ENCODE measurements at regions of chr3 and their contacts with region 1.

Region 1: GRCh38 chr3:168213920-168214319 is 118.2 kb upstream of the GOLIM4 start:
- DNase-seq: peak; percentile 17
- ATAC-seq: peak; percentile 93
- H3K4me3 ChIP-seq: no peak overlapping the region; the same call in 1 of the 2 replicates
- H3K27ac ChIP-seq: no peak overlapping the region; the same call in 1 of the 2 replicates
- H3K4me1 ChIP-seq: peaks cover 3% of the 10 kb centered on the region; the same call in 1 of the 2 replicates
- H3K27me3 ChIP-seq: no peaks in the 10 kb centered on the region
- CTCF ChIP-seq: no peak
- EP300 ChIP-seq: no peak
- POLR2A ChIP-seq: no peak
- RAD21 ChIP-seq: no peak

Region 2: DNA sequence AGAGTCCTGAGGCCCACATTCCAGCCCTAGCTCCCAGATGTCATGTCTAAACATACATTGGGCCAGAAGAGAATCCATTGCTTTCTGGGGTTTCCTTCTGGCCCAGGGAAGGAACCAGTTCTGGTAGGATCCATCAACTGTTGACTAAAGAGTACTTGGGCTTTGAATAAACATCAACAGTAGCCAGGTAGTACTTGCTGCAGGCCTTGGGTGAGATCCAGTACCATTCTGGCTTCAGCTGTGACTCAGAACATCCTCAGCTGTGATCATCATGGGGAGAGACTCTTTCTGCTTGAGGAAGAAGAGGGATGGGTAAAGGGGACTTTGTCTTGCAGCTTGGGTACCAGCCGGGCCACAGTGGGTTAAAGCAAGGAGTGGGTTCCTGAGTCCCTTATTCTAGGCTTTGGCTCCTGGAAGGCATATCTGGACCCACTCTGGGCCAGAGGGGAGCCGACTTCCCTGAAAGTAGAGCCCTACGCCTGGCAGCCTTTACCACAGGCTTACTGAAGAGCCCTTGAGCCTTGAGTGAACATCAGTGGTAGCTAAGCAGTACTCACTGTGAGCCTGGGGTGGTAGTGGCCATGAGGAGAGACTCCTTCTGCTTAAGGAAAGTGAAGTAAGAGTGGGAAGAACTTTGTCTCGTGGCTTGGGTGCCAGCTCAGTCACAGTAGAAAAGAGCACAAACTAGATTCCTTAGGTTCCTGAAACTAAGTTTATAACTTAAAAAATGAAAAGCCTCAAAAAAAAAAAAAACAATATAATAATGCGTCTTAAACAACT is 246.5 kb before region 1 on chr3:
- CTCF ChIA-PET with region 1: no interaction called
- POLR2A ChIA-PET with region 1: no interaction called
- RAD21 ChIA-PET with region 1: no interaction called
- SMC1A ChIA-PET with region 1: no interaction called
- in situ Hi-C with region 1: no loop called
- intact Hi-C with region 1: no loop called
- DNase-seq: no peak
- ATAC-seq: no peak
- H3K4me3 ChIP-seq: no peak overlapping the region
- H3K27ac ChIP-seq: no peak overlapping the region
- H3K4me1 ChIP-seq: no peaks in the 10 kb centered on the region
- H3K27me3 ChIP-seq: no peaks in the 10 kb centered on the region
- CTCF ChIP-seq: no peak
- EP300 ChIP-seq: no peak
- POLR2A ChIP-seq: no peak
- RAD21 ChIP-seq: no peak

Region 3: GRCh38 chr3:168467115-168467714 is 253.3 kb after region 1 on chr3:
- CTCF ChIA-PET with region 1: interaction called, 4 read pairs
- POLR2A ChIA-PET with region 1: no interaction called
- RAD21 ChIA-PET with region 1: no interaction called
- SMC1A ChIA-PET with region 1: interaction called, 6 read pairs
- in situ Hi-C with region 1: loop called (anchors 10 kb)
- intact Hi-C with region 1: loop called (anchors 1 kb)
- DNase-seq: peak; percentile 21
- ATAC-seq: peak; percentile 92
- H3K4me3 ChIP-seq: no peak overlapping the region
- H3K27ac ChIP-seq: peak overlapping the region; percentile 39; the same call in 1 of the 2 replicates
- H3K4me1 ChIP-seq: no peaks in the 10 kb centered on the region
- H3K27me3 ChIP-seq: no peaks in the 10 kb centered on the region
- CTCF ChIP-seq: peak; percentile 28 to 43 (median 28); a peak in 4 of 6 replicates
- EP300 ChIP-seq: no peak
- POLR2A ChIP-seq: no peak
- RAD21 ChIP-seq: peak; percentile 66

Region 4: GRCh38 chr3:168476360-168476980 is 262.6 kb after region 1 on chr3:
- CTCF ChIA-PET with region 1: no interaction called
- POLR2A ChIA-PET with region 1: no interaction called
- RAD21 ChIA-PET with region 1: no interaction called
- SMC1A ChIA-PET with region 1: no interaction called
- in situ Hi-C with region 1: loop called (anchors 10 kb)
- intact Hi-C with region 1: no loop called
- DNase-seq: no peak
- ATAC-seq: no peak
- H3K4me3 ChIP-seq: no peak overlapping the region
- H3K27ac ChIP-seq: no peak overlapping the region
- H3K4me1 ChIP-seq: no peaks in the 10 kb centered on the region
- H3K27me3 ChIP-seq: no peaks in the 10 kb centered on the region
- CTCF ChIP-seq: no peak
- EP300 ChIP-seq: no peak
- POLR2A ChIP-seq: no peak
- RAD21 ChIP-seq: no peak

Region 5: GRCh38 chr3:168511428-168512014 is 297.6 kb after region 1 on chr3:
- CTCF ChIA-PET with region 1: interaction called, 10 read pairs
- POLR2A ChIA-PET with region 1: no interaction called
- RAD21 ChIA-PET with region 1: no interaction called
- SMC1A ChIA-PET with region 1: interaction called, 7 read pairs
- in situ Hi-C with region 1: no loop called
- intact Hi-C with region 1: loop called (anchors 5 kb)
- DNase-seq: no peak
- ATAC-seq: peak; percentile 50; the same call in 2 of the 3 replicates
- H3K4me3 ChIP-seq: no peak overlapping the region
- H3K27ac ChIP-seq: no peak overlapping the region
- H3K4me1 ChIP-seq: no peaks in the 10 kb centered on the region
- H3K27me3 ChIP-seq: no peaks in the 10 kb centered on the region
- CTCF ChIP-seq: peak; percentile 47 to 58 (median 49)
- EP300 ChIP-seq: no peak
- POLR2A ChIP-seq: no peak
- RAD21 ChIP-seq: peak; percentile 47

Region 6: GRCh38 chr3:168615493-168616020 is 401.6 kb after region 1 on chr3:
- CTCF ChIA-PET with region 1: interaction called, 79 read pairs
- POLR2A ChIA-PET with region 1: no interaction called
- RAD21 ChIA-PET with region 1: interaction called, 27 read pairs
- SMC1A ChIA-PET with region 1: interaction called, 20 read pairs
- in situ Hi-C with region 1: loop called (anchors 5 kb)
- intact Hi-C with region 1: loop called (anchors 2 kb)
- DNase-seq: no peak
- ATAC-seq: peak; percentile 52
- H3K4me3 ChIP-seq: no peak overlapping the region
- H3K27ac ChIP-seq: no peak overlapping the region; the same call in 1 of the 2 replicates
- H3K4me1 ChIP-seq: peaks cover 4% of the 10 kb centered on the region; the same call in 1 of the 2 replicates
- H3K27me3 ChIP-seq: no peaks in the 10 kb centered on the region
- CTCF ChIP-seq: no peak
- EP300 ChIP-seq: no peak
- POLR2A ChIP-seq: no peak
- RAD21 ChIP-seq: no peak

Region 7: GRCh38 chr3:168847291-168847883 is 633.5 kb after region 1 on chr3:
- CTCF ChIA-PET with region 1: interaction called, 59 read pairs
- POLR2A ChIA-PET with region 1: no interaction called
- RAD21 ChIA-PET with region 1: interaction called, 31 read pairs
- SMC1A ChIA-PET with region 1: interaction called, 37 read pairs
- in situ Hi-C with region 1: loop called (anchors 5 kb)
- intact Hi-C with region 1: loop called (anchors 1 kb)
- DNase-seq: peak; percentile 12
- ATAC-seq: peak; percentile 77
- H3K4me3 ChIP-seq: no peak overlapping the region
- H3K27ac ChIP-seq: no peak overlapping the region
- H3K4me1 ChIP-seq: no peaks in the 10 kb centered on the region
- H3K27me3 ChIP-seq: no peaks in the 10 kb centered on the region
- CTCF ChIP-seq: peak; percentile 41 to 76 (median 46); a peak in 5 of 6 replicates
- EP300 ChIP-seq: no peak
- POLR2A ChIP-seq: no peak
- RAD21 ChIP-seq: peak; percentile 79

Measured in GM12878 (cell line).